ENCODE measurements at regions of chr3 and their contacts with region 1.

Region 1: GRCh38 chr3:129942296-129942695 is 32.2 kb upstream of the TRH start:
- DNase-seq: peak; percentile 42
- ATAC-seq: peak; percentile 96
- H3K4me3 ChIP-seq: no peak overlapping the region
- H3K27ac ChIP-seq: no peak overlapping the region
- H3K4me1 ChIP-seq: no peaks in the 10 kb centered on the region
- H3K27me3 ChIP-seq: peaks cover 5% of the 10 kb centered on the region; the same call in 1 of the 2 replicates
- CTCF ChIP-seq: peak; percentile 93

Region 2: GRCh38 chr3:129795611-129796010 is 146.7 kb before region 1 on chr3:
- CTCF ChIA-PET with region 1: no interaction called
- POLR2A ChIA-PET with region 1: no interaction called
- in situ Hi-C with region 1: no loop called
- intact Hi-C with region 1: no loop called
- DNase-seq: peak; percentile 42
- ATAC-seq: no peak
- H3K4me3 ChIP-seq: no peak overlapping the region
- H3K27ac ChIP-seq: peak overlapping the region; percentile 73
- H3K4me1 ChIP-seq: peaks cover 34% of the 10 kb centered on the region
- H3K27me3 ChIP-seq: no peaks in the 10 kb centered on the region
- CTCF ChIP-seq: no peak

Region 3: DNA sequence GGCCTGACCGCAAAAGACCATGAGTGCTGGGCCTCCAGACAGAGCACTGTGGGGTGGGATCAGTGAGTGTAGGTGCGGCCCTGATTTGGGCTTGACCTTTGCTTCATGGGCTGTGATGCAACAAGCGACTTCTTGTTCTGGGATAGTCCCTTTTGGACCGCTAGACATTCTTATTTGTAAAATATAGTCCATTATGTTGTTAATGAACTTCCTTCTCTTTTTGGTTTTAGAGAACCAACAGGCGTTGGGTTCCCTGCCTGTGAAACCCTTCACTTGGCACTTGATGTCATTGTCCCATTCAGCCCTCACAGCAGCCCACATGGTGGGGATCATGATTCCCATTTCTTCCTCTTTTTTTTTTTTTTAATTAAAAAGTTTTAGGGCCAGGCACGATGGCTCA is 16.5 kb after region 1 on chr3:
- CTCF ChIA-PET with region 1: no interaction called
- POLR2A ChIA-PET with region 1: no interaction called
- in situ Hi-C with region 1: no loop called
- intact Hi-C with region 1: no loop called
- DNase-seq: no peak
- ATAC-seq: no peak
- H3K4me3 ChIP-seq: no peak overlapping the region
- H3K27ac ChIP-seq: no peak overlapping the region
- H3K4me1 ChIP-seq: no peaks in the 10 kb centered on the region
- H3K27me3 ChIP-seq: peaks cover 5% of the 10 kb centered on the region; the same call in 1 of the 2 replicates
- CTCF ChIP-seq: no peak

Region 4: DNA sequence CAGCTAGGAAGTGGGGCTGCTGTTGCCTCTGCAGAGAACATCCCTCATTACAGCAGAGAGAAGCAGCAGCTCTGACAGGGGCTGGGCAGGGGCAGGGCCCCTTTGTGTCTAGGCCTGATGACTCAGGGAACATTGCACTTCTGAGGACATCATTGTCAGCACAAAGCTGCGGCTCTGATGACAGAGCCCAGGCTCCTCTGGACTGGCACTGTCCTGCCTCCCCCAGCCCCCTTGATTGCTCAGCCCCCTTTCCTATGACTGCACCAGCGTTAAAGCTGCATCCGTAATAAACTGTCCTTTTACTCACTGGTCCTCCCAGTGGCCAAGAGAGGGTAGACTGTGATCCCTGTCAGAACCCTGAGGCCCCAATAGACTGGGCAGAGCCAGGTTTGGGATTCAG is 50.5 kb after region 1 on chr3:
- CTCF ChIA-PET with region 1: interaction called, 13 read pairs
- POLR2A ChIA-PET with region 1: no interaction called
- in situ Hi-C with region 1: no loop called
- intact Hi-C with region 1: loop called (anchors 5 kb)
- DNase-seq: no peak
- ATAC-seq: peak; percentile 95
- H3K4me3 ChIP-seq: no peak overlapping the region
- H3K27ac ChIP-seq: no peak overlapping the region
- H3K4me1 ChIP-seq: no peaks in the 10 kb centered on the region
- H3K27me3 ChIP-seq: peaks cover 18% of the 10 kb centered on the region; the same call in 1 of the 2 replicates
- CTCF ChIP-seq: no peak; the same call in 1 of the 2 replicates

Region 5: DNA sequence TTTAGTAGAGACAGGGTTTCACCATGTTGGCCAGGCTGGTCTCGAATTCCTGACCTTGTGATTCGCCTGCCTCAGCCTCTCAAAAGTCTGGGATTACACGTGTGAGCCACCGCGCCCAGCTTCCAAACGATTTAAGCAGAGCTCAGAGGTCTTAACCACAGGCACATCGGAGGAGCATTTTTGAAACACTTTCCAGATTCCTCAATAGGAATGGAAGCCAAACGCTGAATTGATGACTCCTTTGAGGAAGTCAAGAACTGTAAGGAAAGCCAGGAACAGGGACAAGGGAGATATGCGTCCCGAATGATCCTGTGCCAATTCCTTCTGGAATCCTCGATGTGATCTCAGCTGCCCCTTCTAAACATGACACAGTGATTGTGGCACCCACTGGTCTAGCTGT is 72.2 kb after region 1 on chr3:
- CTCF ChIA-PET with region 1: interaction called, 5 read pairs
- POLR2A ChIA-PET with region 1: interaction called, 10 read pairs
- in situ Hi-C with region 1: no loop called
- intact Hi-C with region 1: no loop called
- DNase-seq: no peak
- ATAC-seq: no peak
- H3K4me3 ChIP-seq: no peak overlapping the region
- H3K27ac ChIP-seq: no peak overlapping the region
- H3K4me1 ChIP-seq: no peaks in the 10 kb centered on the region
- H3K27me3 ChIP-seq: peaks cover 8% of the 10 kb centered on the region; the same call in 1 of the 2 replicates
- CTCF ChIP-seq: no peak

Region 6: DNA sequence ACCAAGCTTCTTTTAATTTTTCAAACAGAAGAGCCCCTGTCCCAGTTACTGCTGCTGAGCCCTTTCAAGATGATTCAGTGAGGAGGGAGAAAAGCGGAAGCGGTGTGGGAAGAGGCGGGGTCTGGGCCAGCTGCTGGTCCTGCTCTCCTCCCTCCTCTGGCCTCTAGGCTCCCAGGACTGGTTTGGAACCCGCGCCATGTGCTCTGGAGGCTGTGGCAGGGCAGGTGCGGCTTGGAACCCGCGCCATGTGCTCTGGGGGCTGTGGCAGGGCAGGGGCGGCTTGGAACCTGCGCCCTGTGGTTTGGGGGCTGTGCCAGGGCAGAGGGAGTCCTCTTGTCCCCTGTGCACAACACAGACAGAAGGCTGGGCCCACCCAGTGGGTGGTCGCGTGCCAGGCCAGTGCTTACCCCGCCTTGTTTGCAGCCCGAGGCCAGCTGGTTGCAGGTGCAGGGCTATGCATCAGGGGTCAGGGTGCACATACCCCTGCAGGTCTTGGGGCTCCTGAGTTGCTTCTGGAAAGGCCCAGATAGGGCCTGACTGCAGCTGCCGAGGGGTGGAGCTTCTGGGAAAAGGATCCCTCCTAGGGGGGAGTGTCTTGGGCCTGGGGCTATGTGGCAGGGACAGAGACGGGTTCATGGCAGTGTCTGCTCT is 151.6 kb after region 1 on chr3:
- CTCF ChIA-PET with region 1: interaction called, 9 read pairs
- POLR2A ChIA-PET with region 1: interaction called, 3 read pairs
- in situ Hi-C with region 1: no loop called
- intact Hi-C with region 1: loop called (anchors 2 kb)
- DNase-seq: no peak
- ATAC-seq: no peak
- H3K4me3 ChIP-seq: no peak overlapping the region
- H3K27ac ChIP-seq: no peak overlapping the region
- H3K4me1 ChIP-seq: no peaks in the 10 kb centered on the region
- H3K27me3 ChIP-seq: no peaks in the 10 kb centered on the region
- CTCF ChIP-seq: no peak

Region 7: GRCh38 chr3:130111185-130111864 is 169.0 kb after region 1 on chr3:
- CTCF ChIA-PET with region 1: interaction called, 13 read pairs
- POLR2A ChIA-PET with region 1: no interaction called
- in situ Hi-C with region 1: no loop called
- intact Hi-C with region 1: no loop called
- DNase-seq: peak; percentile 90
- ATAC-seq: peak; percentile 100
- H3K4me3 ChIP-seq: peak overlapping the region; percentile 77 to 81
- H3K27ac ChIP-seq: peak overlapping the region; percentile 77
- H3K4me1 ChIP-seq: no peaks in the 10 kb centered on the region
- H3K27me3 ChIP-seq: no peaks in the 10 kb centered on the region
- CTCF ChIP-seq: no peak

Measured in Panc1 (cell line).